Naive thymus-derived CD4-positive, alpha-beta T cell (primary cell): ENCODE measurements at regions of chr6 and their contacts with region 1.

Region 1: GRCh38 chr6:44074439-44075136 is 52.7 kb downstream of the MRPL14 start:
- DNase-seq: peak; percentile 44 to 75 (median 63)
- ATAC-seq: peak; percentile 62
- H3K4me3 ChIP-seq: peak overlapping the region; percentile 65
- H3K4me3 Mint-ChIP-seq: peak overlapping the region; percentile 71 to 98 (median 84)
- H3K27ac ChIP-seq: no peak overlapping the region
- H3K27ac Mint-ChIP-seq: peak overlapping the region in 5 of 9 donors; percentile 2 to 80 (median 19)
- H3K4me1 ChIP-seq: peaks cover 12 to 16% of the 10 kb centered on the region in 2 donors
- H3K4me1 Mint-ChIP-seq: peaks cover 0 to 36% (median 15%) of the 10 kb centered on the region in 7 donors
- H3K27me3 ChIP-seq: no peaks in the 10 kb centered on the region
- H3K27me3 Mint-ChIP-seq: peaks cover 0 to 23% (median 12%) of the 10 kb centered on the region in 5 donors

Region 2: GRCh38 chr6:43454696-43455530 is 619.7 kb before region 1 on chr6:
- CTCF ChIA-PET with region 1: no interaction called
- POLR2A ChIA-PET with region 1: no interaction called
- intact Hi-C with region 1: loop called in 1 of 2 experiments (anchors 10 kb)
- DNase-seq: peak in 7 of 9 donors; percentile 28 to 42 (median 31)
- ATAC-seq: peak; percentile 61
- H3K4me3 ChIP-seq: peak overlapping the region; percentile 69
- H3K4me3 Mint-ChIP-seq: peak overlapping the region; percentile 71 to 92 (median 85)
- H3K27ac ChIP-seq: peak overlapping the region; percentile 63
- H3K27ac Mint-ChIP-seq: peak overlapping the region in 7 of 9 donors; percentile 34 to 91 (median 70)
- H3K4me1 ChIP-seq: peaks cover 6 to 7% of the 10 kb centered on the region in 2 donors
- H3K4me1 Mint-ChIP-seq: peaks cover 10 to 19% (median 12%) of the 10 kb centered on the region in 7 donors
- H3K27me3 ChIP-seq: no peaks in the 10 kb centered on the region
- H3K27me3 Mint-ChIP-seq: peaks cover 0 to 34% (median 0%) of the 10 kb centered on the region in 5 donors

Region 3: GRCh38 chr6:43608310-43608763 is 466.3 kb before region 1 on chr6:
- CTCF ChIA-PET with region 1: interaction called, 6 read pairs
- POLR2A ChIA-PET with region 1: no interaction called
- intact Hi-C with region 1: loop called (anchors 1 kb)
- DNase-seq: peak in 8 of 9 donors; percentile 12 to 49 (median 43)
- ATAC-seq: peak; percentile 57
- H3K4me3 ChIP-seq: no peak overlapping the region
- H3K4me3 Mint-ChIP-seq: no peak overlapping the region
- H3K27ac ChIP-seq: no peak overlapping the region
- H3K27ac Mint-ChIP-seq: peak overlapping the region in 4 of 9 donors; percentile 0 to 16 (median 4)
- H3K4me1 ChIP-seq: no peaks in the 10 kb centered on the region
- H3K4me1 Mint-ChIP-seq: peaks cover 0 to 10% (median 5%) of the 10 kb centered on the region in 7 donors
- H3K27me3 ChIP-seq: no peaks in the 10 kb centered on the region
- H3K27me3 Mint-ChIP-seq: no peaks in the 10 kb centered on the region

Region 4: DNA sequence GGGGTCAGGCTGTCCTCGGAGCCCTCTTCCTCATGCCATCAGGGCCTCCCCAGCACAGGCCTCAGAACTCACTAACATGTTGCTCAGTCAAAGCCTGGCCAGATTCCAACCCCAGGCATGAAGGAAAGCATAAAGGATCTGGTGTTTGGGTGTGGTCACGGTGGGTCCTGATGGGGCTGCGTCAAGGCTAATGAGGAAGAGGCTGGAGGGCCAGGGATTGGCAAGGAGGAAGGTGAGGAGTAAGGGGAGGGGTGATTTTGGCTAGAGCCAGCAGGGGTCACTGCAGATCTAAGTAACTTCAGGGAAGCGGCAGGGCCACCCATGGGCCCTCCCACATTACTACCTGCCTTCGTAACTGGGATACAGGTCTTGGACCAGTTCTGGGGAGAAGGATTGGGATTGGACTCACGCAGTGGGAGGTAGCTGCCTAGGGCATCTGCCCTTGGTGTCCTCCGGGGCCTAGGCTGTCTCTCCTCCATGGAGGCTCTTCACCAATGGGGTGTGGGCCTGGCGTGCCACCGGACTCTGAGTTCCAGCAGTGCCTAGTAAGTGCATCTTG is 350.8 kb before region 1 on chr6:
- CTCF ChIA-PET with region 1: interaction called, 30 read pairs
- POLR2A ChIA-PET with region 1: interaction called, 3 read pairs
- intact Hi-C with region 1: loop called (anchors 1 kb)
- DNase-seq: peak; percentile 42 to 68 (median 60)
- ATAC-seq: peak; percentile 77
- H3K4me3 ChIP-seq: no peak overlapping the region
- H3K4me3 Mint-ChIP-seq: peak overlapping the region in 3 of 10 donors; percentile 55 to 67 (median 66)
- H3K27ac ChIP-seq: no peak overlapping the region
- H3K27ac Mint-ChIP-seq: peak overlapping the region in 3 of 9 donors; percentile 3 to 97 (median 67)
- H3K4me1 ChIP-seq: peaks cover 19 to 23% of the 10 kb centered on the region in 2 donors
- H3K4me1 Mint-ChIP-seq: peaks cover 20 to 38% (median 29%) of the 10 kb centered on the region in 7 donors
- H3K27me3 ChIP-seq: no peaks in the 10 kb centered on the region
- H3K27me3 Mint-ChIP-seq: peaks cover 0 to 7% (median 0%) of the 10 kb centered on the region in 5 donors

Region 5: GRCh38 chr6:43774776-43775534 is 299.6 kb before region 1 on chr6:
- CTCF ChIA-PET with region 1: interaction called, 43 read pairs
- POLR2A ChIA-PET with region 1: no interaction called
- intact Hi-C with region 1: loop called (anchors 1 kb)
- DNase-seq: peak in 7 of 9 donors; percentile 33 to 65 (median 43)
- ATAC-seq: peak; percentile 44
- H3K4me3 ChIP-seq: no peak overlapping the region
- H3K4me3 Mint-ChIP-seq: peak overlapping the region in 2 of 10 donors; percentile 14 to 68
- H3K27ac ChIP-seq: no peak overlapping the region
- H3K27ac Mint-ChIP-seq: peak overlapping the region in 2 of 9 donors; percentile 25 to 45
- H3K4me1 ChIP-seq: peaks cover 3 to 9% of the 10 kb centered on the region in 2 donors
- H3K4me1 Mint-ChIP-seq: peaks cover 5 to 49% (median 18%) of the 10 kb centered on the region in 7 donors
- H3K27me3 ChIP-seq: peaks cover 6 to 8% of the 10 kb centered on the region in 2 donors
- H3K27me3 Mint-ChIP-seq: peaks cover 0 to 17% (median 15%) of the 10 kb centered on the region in 5 donors

Region 6: GRCh38 chr6:44049163-44049988 is 25.2 kb before region 1 on chr6:
- CTCF ChIA-PET with region 1: interaction called, 3 read pairs
- POLR2A ChIA-PET with region 1: no interaction called
- intact Hi-C with region 1: loop called in 1 of 2 experiments (anchors 1 kb)
- DNase-seq: no peak
- ATAC-seq: no peak
- H3K4me3 ChIP-seq: no peak overlapping the region
- H3K4me3 Mint-ChIP-seq: peak overlapping the region in 1 of 10 donors; percentile 54
- H3K27ac ChIP-seq: no peak overlapping the region
- H3K27ac Mint-ChIP-seq: peak overlapping the region in 1 of 9 donors; percentile 89
- H3K4me1 ChIP-seq: no peaks in the 10 kb centered on the region
- H3K4me1 Mint-ChIP-seq: peaks cover 0 to 19% (median 0%) of the 10 kb centered on the region in 7 donors
- H3K27me3 ChIP-seq: no peaks in the 10 kb centered on the region
- H3K27me3 Mint-ChIP-seq: peaks cover 0 to 12% (median 0%) of the 10 kb centered on the region in 5 donors